ENCODE measurements at regions of chr22 and their contacts with region 1.

Region 1: GRCh38 chr22:21652010-21652546 is 10.0 kb downstream of the SDF2L1 start:
- DNase-seq: peak; percentile 60 to 90 (median 77)
- ATAC-seq: peak; percentile 98
- H3K4me3 ChIP-seq: peak overlapping the region; percentile 63
- H3K4me3 Mint-ChIP-seq: peak overlapping the region; percentile 82 to 89 (median 88)
- H3K27ac ChIP-seq: peak overlapping the region; percentile 45
- H3K27ac Mint-ChIP-seq: peak overlapping the region in 3 of 9 donors; percentile 8 to 85 (median 59)
- H3K4me1 ChIP-seq: peaks cover 9 to 20% of the 10 kb centered on the region in 2 donors
- H3K4me1 Mint-ChIP-seq: peaks cover 16 to 38% (median 30%) of the 10 kb centered on the region in 7 donors
- H3K27me3 ChIP-seq: no peaks in the 10 kb centered on the region
- H3K27me3 Mint-ChIP-seq: no peaks in the 10 kb centered on the region

Region 2: GRCh38 chr22:21666786-21667185 is 14.7 kb after region 1 on chr22:
- CTCF ChIA-PET with region 1: interaction called, 4 read pairs
- POLR2A ChIA-PET with region 1: interaction called, 6 read pairs
- intact Hi-C with region 1: loop called in 1 of 2 experiments (anchors 1 kb)
- DNase-seq: no peak
- ATAC-seq: no peak
- H3K4me3 ChIP-seq: peak overlapping the region; percentile 99
- H3K4me3 Mint-ChIP-seq: peak overlapping the region; percentile 95 to 100 (median 98)
- H3K27ac ChIP-seq: peak overlapping the region; percentile 86
- H3K27ac Mint-ChIP-seq: peak overlapping the region; percentile 79 to 99 (median 97)
- H3K4me1 ChIP-seq: peaks cover 6 to 16% of the 10 kb centered on the region in 2 donors
- H3K4me1 Mint-ChIP-seq: peaks cover 29 to 45% (median 42%) of the 10 kb centered on the region in 7 donors
- H3K27me3 ChIP-seq: no peaks in the 10 kb centered on the region
- H3K27me3 Mint-ChIP-seq: peaks cover 0 to 2% (median 0%) of the 10 kb centered on the region in 5 donors

Measured in naive thymus-derived CD4-positive, alpha-beta T cell (primary cell).